CD14-positive monocyte (primary cell): ENCODE measurements at regions of chr10 and their contacts with region 1.

Region 1: GRCh38 chr10:75401569-75402485 is at the start of gene ZNF503:
- DNase-seq: peak; percentile 82 to 87 (median 86)
- H3K4me3 ChIP-seq: peak within 1 kb of the TSS; percentile 81 to 100 (median 83)
- H3K4me3 Mint-ChIP-seq: peak within 1 kb of the TSS; percentile 97 to 98
- H3K27ac ChIP-seq: peak within 1 kb of the TSS; percentile 85 to 94
- H3K27ac Mint-ChIP-seq: peak within 1 kb of the TSS; percentile 90 to 98 (median 96)
- H3K4me1 ChIP-seq: peaks cover 41 to 62% of the 10 kb centered on the region in 2 donors
- H3K4me1 Mint-ChIP-seq: peaks cover 37% of the 10 kb centered on the region
- H3K27me3 ChIP-seq: peaks cover 40 to 58% of the 10 kb centered on the region in 2 donors
- H3K27me3 Mint-ChIP-seq: peaks cover 51 to 66% (median 57%) of the 10 kb centered on the region in 3 donors
- CTCF ChIP-seq: peak; percentile 2
- polyA plus RNA-seq, gene ZNF503: 0.65 to 7.2 (median 1.3) TPM

Region 2: GRCh38 chr10:75187961-75188426 is 213.8 kb before region 1 on chr10:
- intact Hi-C with region 1: no loop called
- DNase-seq: peak; percentile 45 to 62 (median 61)
- H3K4me3 ChIP-seq: no peak overlapping the region
- H3K4me3 Mint-ChIP-seq: no peak overlapping the region
- H3K27ac ChIP-seq: no peak overlapping the region
- H3K27ac Mint-ChIP-seq: peak overlapping the region in 4 of 7 donors; percentile 25 to 58 (median 46)
- H3K4me1 ChIP-seq: peaks cover 15 to 18% of the 10 kb centered on the region in 2 donors
- H3K4me1 Mint-ChIP-seq: peaks cover 19% of the 10 kb centered on the region
- H3K27me3 ChIP-seq: no peaks in the 10 kb centered on the region
- H3K27me3 Mint-ChIP-seq: peaks cover 0 to 1% (median 0%) of the 10 kb centered on the region in 3 donors
- CTCF ChIP-seq: peak; percentile 76

Region 3: GRCh38 chr10:75294866-75295701 is 106.7 kb before region 1 on chr10:
- intact Hi-C with region 1: loop called in 1 of 2 experiments (anchors 10 kb)
- DNase-seq: peak; percentile 36 to 60 (median 55)
- H3K4me3 ChIP-seq: peak overlapping the region; percentile 59 to 83 (median 78)
- H3K4me3 Mint-ChIP-seq: peak overlapping the region; percentile 78 to 88
- H3K27ac ChIP-seq: peak overlapping the region in 1 of 2 donors; percentile 22
- H3K27ac Mint-ChIP-seq: peak overlapping the region in 4 of 7 donors; percentile 24 to 47 (median 30)
- H3K4me1 ChIP-seq: peaks cover 13 to 15% of the 10 kb centered on the region in 2 donors
- H3K4me1 Mint-ChIP-seq: peaks cover 9% of the 10 kb centered on the region
- H3K27me3 ChIP-seq: peaks cover 24 to 38% of the 10 kb centered on the region in 2 donors
- H3K27me3 Mint-ChIP-seq: peaks cover 19 to 21% (median 20%) of the 10 kb centered on the region in 3 donors
- CTCF ChIP-seq: peak; percentile 37

Region 4: GRCh38 chr10:75305675-75306074 is 96.2 kb before region 1 on chr10:
- intact Hi-C with region 1: no loop called
- DNase-seq: no peak
- H3K4me3 ChIP-seq: no peak overlapping the region
- H3K4me3 Mint-ChIP-seq: no peak overlapping the region
- H3K27ac ChIP-seq: no peak overlapping the region
- H3K27ac Mint-ChIP-seq: no peak overlapping the region
- H3K4me1 ChIP-seq: no peaks in the 10 kb centered on the region
- H3K4me1 Mint-ChIP-seq: no peaks in the 10 kb centered on the region
- H3K27me3 ChIP-seq: no peaks in the 10 kb centered on the region
- H3K27me3 Mint-ChIP-seq: peaks cover 0 to 5% (median 0%) of the 10 kb centered on the region in 3 donors
- CTCF ChIP-seq: no peak

Region 5: DNA sequence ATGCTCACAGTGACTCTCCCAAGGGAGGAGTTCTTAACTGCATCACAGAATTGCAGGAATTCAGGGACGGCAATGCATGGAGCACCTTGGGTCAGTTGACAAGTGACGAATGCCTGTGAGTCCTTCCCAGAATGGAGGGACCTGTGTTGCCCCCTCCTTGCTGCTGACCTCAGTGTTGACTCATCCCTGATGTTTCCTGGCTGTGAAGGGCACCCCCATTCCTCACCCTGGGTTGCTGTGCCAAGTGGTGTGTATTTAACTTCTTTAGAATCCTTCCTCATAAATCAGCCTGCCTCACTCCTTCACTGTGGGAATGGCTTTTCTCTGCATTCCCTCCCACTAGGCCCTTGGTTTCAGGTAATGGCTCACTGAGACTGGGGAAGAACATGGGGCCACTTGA is 128.5 kb after region 1 on chr10:
- intact Hi-C with region 1: loop called (anchors 5 to 10 kb)
- DNase-seq: peak; percentile 16 to 76 (median 28)
- H3K4me3 ChIP-seq: no peak overlapping the region
- H3K4me3 Mint-ChIP-seq: no peak overlapping the region
- H3K27ac ChIP-seq: no peak overlapping the region
- H3K27ac Mint-ChIP-seq: peak overlapping the region in 2 of 7 donors; percentile 33 to 83
- H3K4me1 ChIP-seq: peaks cover 49 to 50% of the 10 kb centered on the region in 2 donors
- H3K4me1 Mint-ChIP-seq: peaks cover 50% of the 10 kb centered on the region
- H3K27me3 ChIP-seq: no peaks in the 10 kb centered on the region
- H3K27me3 Mint-ChIP-seq: peaks cover 0 to 4% (median 0%) of the 10 kb centered on the region in 3 donors
- CTCF ChIP-seq: no peak

Region 6: DNA sequence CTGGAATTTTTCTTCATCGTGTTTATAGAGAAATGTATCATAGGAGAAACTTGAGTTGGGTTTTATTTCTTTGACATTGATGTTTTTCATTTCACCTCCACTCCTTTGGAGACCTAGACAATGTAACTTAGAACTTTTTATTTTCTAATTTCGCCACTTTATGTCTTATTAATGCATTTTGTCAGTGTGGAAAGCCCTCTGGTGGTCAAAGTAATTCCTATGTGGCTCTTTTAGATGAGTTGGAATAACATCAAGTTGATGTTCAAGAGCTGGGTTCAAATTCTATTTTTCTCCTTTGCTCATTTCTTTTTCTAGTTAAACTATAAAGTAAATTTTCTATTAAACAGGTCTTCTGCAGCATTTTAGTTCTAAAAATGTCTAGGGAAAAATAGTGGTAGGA is 508.2 kb after region 1 on chr10:
- intact Hi-C with region 1: loop called in 1 of 2 experiments (anchors 10 kb)
- DNase-seq: peak in 1 of 3 donors; percentile 5
- H3K4me3 ChIP-seq: no peak overlapping the region
- H3K4me3 Mint-ChIP-seq: no peak overlapping the region
- H3K27ac ChIP-seq: no peak overlapping the region
- H3K27ac Mint-ChIP-seq: no peak overlapping the region
- H3K4me1 ChIP-seq: no peaks in the 10 kb centered on the region
- H3K4me1 Mint-ChIP-seq: peaks cover 5% of the 10 kb centered on the region
- H3K27me3 ChIP-seq: no peaks in the 10 kb centered on the region
- H3K27me3 Mint-ChIP-seq: no peaks in the 10 kb centered on the region
- CTCF ChIP-seq: peak; percentile 31

Region 7: GRCh38 chr10:76547352-76547972 is 1145.6 kb after region 1 on chr10:
- intact Hi-C with region 1: loop called in 1 of 2 experiments (anchors 5 kb)
- DNase-seq: peak; percentile 45 to 68 (median 67)
- H3K4me3 ChIP-seq: no peak overlapping the region
- H3K4me3 Mint-ChIP-seq: no peak overlapping the region
- H3K27ac ChIP-seq: no peak overlapping the region
- H3K27ac Mint-ChIP-seq: no peak overlapping the region
- H3K4me1 ChIP-seq: peaks cover 0 to 2% of the 10 kb centered on the region in 2 donors
- H3K4me1 Mint-ChIP-seq: peaks cover 5% of the 10 kb centered on the region
- H3K27me3 ChIP-seq: no peaks in the 10 kb centered on the region
- H3K27me3 Mint-ChIP-seq: no peaks in the 10 kb centered on the region
- CTCF ChIP-seq: peak; percentile 86